HAP-1 (cell line): ENCODE measurements at regions of chr15 and their contacts with region 1.

Region 1: DNA sequence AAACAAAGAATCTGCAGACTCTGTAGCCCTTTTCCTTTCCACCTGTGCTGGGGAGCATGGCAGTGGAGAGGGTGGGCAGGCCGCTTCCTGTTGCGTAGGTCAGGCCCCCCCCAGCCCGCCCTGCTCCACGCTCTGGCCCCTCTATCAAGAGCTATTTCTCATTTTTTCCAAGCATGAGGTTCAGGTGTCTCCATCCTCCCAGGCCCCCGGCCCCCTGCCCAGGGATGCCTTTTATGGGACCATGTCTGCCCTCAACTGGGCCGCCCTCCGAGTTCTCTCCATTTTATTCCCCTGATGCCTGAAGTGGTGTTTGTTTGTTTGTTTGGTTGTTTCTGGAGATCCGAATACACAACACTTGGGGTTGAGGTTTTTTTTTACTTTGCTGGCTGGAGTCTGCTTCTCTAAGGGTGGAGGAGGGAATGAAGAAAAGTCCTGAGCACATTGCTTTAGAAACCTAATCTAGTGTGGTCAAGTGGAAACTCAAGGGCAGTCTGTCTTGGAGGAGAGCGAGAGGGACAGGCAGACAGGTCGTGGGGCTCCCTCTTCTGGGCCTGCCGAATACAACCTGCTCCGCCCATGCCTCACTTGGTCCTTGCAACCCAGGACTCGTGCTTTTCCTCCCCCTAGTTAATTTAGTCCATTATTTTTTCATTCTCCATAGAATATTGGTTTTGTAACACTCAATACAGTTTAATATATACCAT is 176.5 kb upstream of the LYSMD4 start:
- DNase-seq: peak; percentile 63 to 65
- H3K4me3 ChIP-seq: no peak overlapping the region
- H3K4me1 ChIP-seq: no peaks in the 10 kb centered on the region
- H3K27me3 ChIP-seq: no peaks in the 10 kb centered on the region

Region 2: DNA sequence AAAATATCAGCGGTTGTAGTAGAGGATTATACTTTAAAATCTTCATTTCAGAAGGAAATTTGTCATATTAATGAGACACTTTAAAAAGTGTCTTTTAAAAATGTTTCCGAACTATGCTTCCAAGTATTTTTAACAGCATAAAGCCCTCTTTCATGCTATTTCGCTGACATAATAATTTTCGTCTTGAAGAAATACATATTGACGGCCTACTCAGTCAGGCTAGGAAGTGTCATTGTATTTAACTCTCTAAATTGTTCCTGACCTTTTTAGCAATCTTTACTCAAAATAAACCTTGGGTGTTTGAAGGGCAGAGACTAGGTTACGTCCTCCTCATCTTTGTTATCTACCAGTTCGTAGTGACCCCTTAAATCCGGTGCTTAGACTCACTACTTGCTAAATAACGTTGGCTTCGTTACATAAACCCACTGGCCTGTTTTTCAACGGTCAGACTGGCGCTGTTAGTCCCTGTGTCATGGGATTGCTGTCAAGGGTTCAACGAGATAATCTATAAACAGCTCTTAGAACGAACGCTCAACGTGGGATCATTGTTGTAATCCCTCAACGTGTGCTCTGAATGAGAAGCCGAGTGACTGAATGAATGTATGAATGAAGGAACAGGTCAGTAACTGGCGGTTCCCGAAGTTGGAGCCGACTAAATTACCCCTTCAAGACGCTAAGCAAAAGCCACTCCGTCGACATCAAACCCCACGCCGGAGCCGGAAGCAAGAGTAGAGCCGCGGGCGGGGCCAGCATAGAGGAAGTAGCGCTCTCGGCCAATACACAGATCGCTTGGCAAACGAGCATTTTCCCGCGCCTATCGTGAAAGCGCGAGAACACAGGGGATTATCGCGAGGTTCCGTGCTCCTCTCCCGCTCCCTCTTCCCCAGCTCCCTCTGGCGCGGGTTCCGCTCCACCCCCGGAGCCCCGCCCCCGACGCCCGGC is 659.0 kb before region 1 on chr15:
- in situ Hi-C with region 1: loop called (anchors 25 kb)
- DNase-seq: peak; percentile 98
- H3K4me3 ChIP-seq: peak overlapping the region; percentile 80
- H3K4me1 ChIP-seq: peaks cover 3% of the 10 kb centered on the region; the same call in 1 of the 2 replicates
- H3K27me3 ChIP-seq: no peaks in the 10 kb centered on the region

Region 3: GRCh38 chr15:99476413-99477222 is 433.1 kb before region 1 on chr15:
- in situ Hi-C with region 1: no loop called
- DNase-seq: peak in 1 of 2 experiments; percentile 59
- H3K4me3 ChIP-seq: no peak overlapping the region
- H3K4me1 ChIP-seq: peaks cover 31% of the 10 kb centered on the region
- H3K27me3 ChIP-seq: no peaks in the 10 kb centered on the region

Region 4: GRCh38 chr15:100111103-100112060 is 201.6 kb after region 1 on chr15:
- in situ Hi-C with region 1: no loop called
- DNase-seq: no peak
- H3K4me3 ChIP-seq: no peak overlapping the region
- H3K4me1 ChIP-seq: peaks cover 5% of the 10 kb centered on the region
- H3K27me3 ChIP-seq: no peaks in the 10 kb centered on the region

Region 5: GRCh38 chr15:100433300-100433699 is 523.6 kb after region 1 on chr15:
- in situ Hi-C with region 1: no loop called
- DNase-seq: no peak
- H3K4me3 ChIP-seq: no peak overlapping the region
- H3K4me1 ChIP-seq: no peaks in the 10 kb centered on the region
- H3K27me3 ChIP-seq: no peaks in the 10 kb centered on the region